Left cardiac atrium (tissue), 4 donors: ENCODE measurements at regions of chr11 and their contacts with region 1.

Region 1: GRCh38 chr11:118939953-118940598 is 14.3 kb upstream of the BCL9L start:
- DNase-seq: no peak
- ATAC-seq: peak; percentile 43 to 56

Region 2: GRCh38 chr11:118883368-118884071 is 56.6 kb before region 1 on chr11 and contains the start of gene CXCR5:
- intact Hi-C with region 1: no loop called
- DNase-seq: no peak
- ATAC-seq: no peak
- total RNA-seq, gene CXCR5: not detected

Region 3: GRCh38 chr11:118901494-118902335 is 38.4 kb before region 1 on chr11:
- intact Hi-C with region 1: loop called in 1 of 2 experiments (anchors 5 kb)
- DNase-seq: no peak
- ATAC-seq: no peak